ENCODE measurements at regions of chr18 and their contacts with region 1.

Region 1: GRCh38 chr18:28512357-28512756 is 335.4 kb upstream of the CDH2 start:
- DNase-seq: no peak
- H3K4me3 ChIP-seq: no peak overlapping the region
- H3K27ac ChIP-seq: no peak overlapping the region
- H3K4me1 ChIP-seq: no peaks in the 10 kb centered on the region
- H3K27me3 ChIP-seq: no peaks in the 10 kb centered on the region
- CTCF ChIP-seq: no peak
- EP300 ChIP-seq: no peak
- POLR2A ChIP-seq: no peak

Region 2: DNA sequence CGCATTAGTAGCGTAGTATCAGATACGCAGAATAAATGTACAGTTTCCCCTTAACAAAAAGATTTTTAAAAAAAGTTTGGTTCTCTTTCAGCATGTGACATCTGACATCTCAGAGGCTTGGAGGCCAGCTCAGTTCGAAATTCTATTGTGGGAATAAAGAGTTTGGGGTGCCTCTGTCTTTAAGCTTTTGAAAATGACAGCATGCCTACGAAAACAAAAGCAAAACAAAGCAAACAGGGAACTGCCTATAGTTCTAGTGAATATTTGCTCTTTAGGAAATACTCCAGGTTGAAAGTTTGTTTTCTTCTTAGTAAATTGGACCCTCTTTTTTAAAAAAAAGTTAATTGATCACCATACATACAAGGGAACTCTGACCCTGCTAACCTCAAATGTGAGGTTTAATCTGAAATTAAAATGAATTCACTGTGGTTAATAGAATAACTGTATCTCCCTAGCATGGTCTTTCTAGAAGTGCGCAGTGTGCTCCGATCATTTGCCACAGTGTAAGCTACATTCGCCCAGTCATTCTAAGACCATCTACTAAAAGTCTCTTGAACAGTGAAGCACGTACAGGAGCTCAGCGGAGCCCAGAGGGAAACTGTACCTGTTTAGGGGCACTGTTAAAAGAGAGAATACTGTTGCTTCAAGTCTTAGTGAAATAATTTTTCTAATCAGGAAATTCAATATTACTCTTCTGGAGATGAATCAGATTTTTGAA is 11.6 kb after region 1 on chr18:
- in situ Hi-C with region 1: no loop called
- intact Hi-C with region 1: loop called (anchors 1 kb)
- DNase-seq: no peak
- H3K4me3 ChIP-seq: no peak overlapping the region
- H3K27ac ChIP-seq: no peak overlapping the region
- H3K4me1 ChIP-seq: no peaks in the 10 kb centered on the region
- H3K27me3 ChIP-seq: no peaks in the 10 kb centered on the region
- CTCF ChIP-seq: no peak
- EP300 ChIP-seq: no peak
- POLR2A ChIP-seq: no peak

Region 3: GRCh38 chr18:28606686-28607085 is 94.3 kb after region 1 on chr18:
- in situ Hi-C with region 1: loop called in 1 of 4 experiments (anchors 25 kb)
- intact Hi-C with region 1: no loop called
- DNase-seq: no peak
- H3K4me3 ChIP-seq: no peak overlapping the region
- H3K27ac ChIP-seq: no peak overlapping the region
- H3K4me1 ChIP-seq: no peaks in the 10 kb centered on the region
- H3K27me3 ChIP-seq: no peaks in the 10 kb centered on the region
- CTCF ChIP-seq: no peak
- EP300 ChIP-seq: no peak
- POLR2A ChIP-seq: no peak

Region 4: DNA sequence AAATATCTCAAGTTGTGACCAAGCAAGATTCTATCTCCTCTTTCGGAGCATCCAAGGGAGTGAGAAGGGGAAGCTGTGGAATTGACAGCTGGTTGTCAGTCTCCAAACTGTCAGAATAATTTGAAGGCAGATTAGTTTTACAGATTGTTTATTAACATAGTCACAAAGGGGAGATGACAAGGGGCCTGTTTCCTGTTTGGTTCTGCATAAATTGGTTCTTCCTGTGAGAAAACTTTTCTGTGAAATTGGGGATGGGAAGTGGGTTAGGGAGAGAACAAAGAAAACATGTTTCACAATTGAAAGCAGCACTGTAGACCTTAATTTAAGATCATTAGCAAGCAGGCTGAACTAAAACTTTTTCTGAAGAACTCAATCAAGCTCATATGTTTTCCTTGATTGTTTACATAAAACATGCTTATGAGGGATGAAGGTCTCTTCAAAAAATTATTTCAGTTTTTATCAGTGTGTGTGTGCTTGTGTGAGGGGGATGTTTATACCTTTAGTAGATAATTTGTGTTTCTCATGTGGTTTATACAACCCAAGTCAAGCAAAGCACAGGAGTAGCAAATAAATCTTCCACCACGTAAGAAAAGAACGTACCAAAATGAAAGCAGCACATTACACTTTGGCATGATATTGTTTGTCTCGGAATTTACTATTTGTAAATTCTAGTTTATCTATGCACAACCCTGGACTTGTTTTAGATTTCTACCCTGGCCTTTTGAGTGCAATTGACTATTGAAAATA is 269.4 kb after region 1 on chr18:
- in situ Hi-C with region 1: no loop called
- intact Hi-C with region 1: no loop called
- DNase-seq: no peak
- H3K4me3 ChIP-seq: no peak overlapping the region
- H3K27ac ChIP-seq: no peak overlapping the region
- H3K4me1 ChIP-seq: no peaks in the 10 kb centered on the region
- H3K27me3 ChIP-seq: no peaks in the 10 kb centered on the region
- CTCF ChIP-seq: no peak
- EP300 ChIP-seq: no peak
- POLR2A ChIP-seq: no peak